Activated CD4-positive, alpha-beta T cell treated with anti-CD3 and anti-CD28 coated beads for 36 hours (primary cell): ENCODE measurements at regions of chr11 and their contacts with region 1.

Region 1: GRCh38 chr11:95150946-95151684 is 61.5 kb downstream of the ENDOD1 start:
- DNase-seq: peak; percentile 96
- ATAC-seq: peak; percentile 88
- H3K4me3 Mint-ChIP-seq: peak overlapping the region; percentile 83
- H3K27ac Mint-ChIP-seq: peak overlapping the region; percentile 87
- H3K4me1 Mint-ChIP-seq: peaks cover 36% of the 10 kb centered on the region
- H3K27me3 Mint-ChIP-seq: peaks cover 3% of the 10 kb centered on the region

Region 2: DNA sequence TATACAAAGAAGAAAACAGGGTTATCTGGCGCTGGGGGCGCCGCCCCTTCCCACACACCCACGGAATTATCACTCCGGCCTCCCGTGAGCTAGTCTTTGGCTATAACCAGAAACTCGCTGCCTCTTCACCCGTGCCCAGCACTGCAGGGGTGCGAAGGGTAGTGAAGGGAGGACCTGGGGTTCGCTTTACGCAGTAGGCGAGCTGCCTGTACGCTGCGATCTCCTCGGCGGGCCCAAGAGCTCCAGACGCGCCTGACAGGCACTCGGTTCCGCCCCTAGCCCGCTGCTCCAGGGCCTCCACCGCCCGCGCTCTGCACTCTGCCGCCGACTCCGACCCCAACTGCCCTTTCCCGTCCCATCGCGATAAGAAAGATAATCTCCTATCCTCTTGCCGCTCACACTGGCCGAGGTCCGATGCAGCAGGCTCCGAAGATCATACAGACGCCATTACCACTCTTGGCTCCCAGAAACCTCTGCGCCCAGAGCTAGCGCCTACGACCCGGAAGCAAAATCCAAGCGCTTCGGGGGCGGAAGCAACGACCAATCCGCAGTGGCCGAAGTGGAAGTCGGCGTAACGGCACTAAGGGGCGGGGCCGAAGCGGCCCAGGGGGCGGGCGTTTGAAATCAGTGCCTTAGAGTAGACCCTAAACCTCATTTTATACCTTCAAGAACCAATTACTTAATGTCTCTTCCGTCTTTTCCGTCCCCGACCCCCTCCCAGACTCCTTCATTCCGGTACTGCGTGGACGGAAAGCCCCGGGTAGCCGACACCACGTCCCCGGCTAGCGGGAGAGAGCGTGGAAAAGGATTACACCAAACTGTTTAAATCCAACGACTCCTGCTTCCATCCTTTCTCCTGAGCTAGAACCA is 177.8 kb before region 1 on chr11 and contains the starts of genes CWC15 and KDM4D:
- CTCF ChIA-PET with region 1: interaction called, 4 read pairs
- POLR2A ChIA-PET with region 1: no interaction called
- intact Hi-C with region 1: loop called (anchors 1 to 2 kb)
- DNase-seq: peak; percentile 97
- ATAC-seq: peak; percentile 99
- H3K4me3 Mint-ChIP-seq: peak within 1 kb of the TSS; percentile 84
- H3K27ac Mint-ChIP-seq: peak within 1 kb of the TSS; percentile 94
- H3K4me1 Mint-ChIP-seq: peaks cover 27% of the 10 kb centered on the region
- H3K27me3 Mint-ChIP-seq: no peaks in the 10 kb centered on the region
- total RNA-seq, gene CWC15: 74.7 to 85.0 TPM
- total RNA-seq, gene KDM4D: 1.5 to 1.8 TPM

Region 3: GRCh38 chr11:95089620-95090542 is 61.2 kb before region 1 on chr11 and contains the start of gene ENDOD1:
- CTCF ChIA-PET with region 1: interaction called, 9 read pairs
- POLR2A ChIA-PET with region 1: no interaction called
- intact Hi-C with region 1: loop called (anchors 1 to 2 kb)
- DNase-seq: peak; percentile 91
- ATAC-seq: peak; percentile 91
- H3K4me3 Mint-ChIP-seq: peak within 1 kb of the TSS; percentile 84
- H3K27ac Mint-ChIP-seq: peak within 1 kb of the TSS; percentile 96
- H3K4me1 Mint-ChIP-seq: peaks cover 61% of the 10 kb centered on the region
- H3K27me3 Mint-ChIP-seq: no peaks in the 10 kb centered on the region
- total RNA-seq, gene ENDOD1: 11.1 to 13.1 TPM

Region 4: GRCh38 chr11:95187723-95188122 is 36.6 kb after region 1 on chr11:
- CTCF ChIA-PET with region 1: no interaction called
- POLR2A ChIA-PET with region 1: no interaction called
- intact Hi-C with region 1: no loop called
- DNase-seq: peak; percentile 13
- ATAC-seq: peak; percentile 90
- H3K4me3 Mint-ChIP-seq: no peak overlapping the region
- H3K27ac Mint-ChIP-seq: peak overlapping the region; percentile 16
- H3K4me1 Mint-ChIP-seq: peaks cover 21% of the 10 kb centered on the region
- H3K27me3 Mint-ChIP-seq: no peaks in the 10 kb centered on the region

Region 5: DNA sequence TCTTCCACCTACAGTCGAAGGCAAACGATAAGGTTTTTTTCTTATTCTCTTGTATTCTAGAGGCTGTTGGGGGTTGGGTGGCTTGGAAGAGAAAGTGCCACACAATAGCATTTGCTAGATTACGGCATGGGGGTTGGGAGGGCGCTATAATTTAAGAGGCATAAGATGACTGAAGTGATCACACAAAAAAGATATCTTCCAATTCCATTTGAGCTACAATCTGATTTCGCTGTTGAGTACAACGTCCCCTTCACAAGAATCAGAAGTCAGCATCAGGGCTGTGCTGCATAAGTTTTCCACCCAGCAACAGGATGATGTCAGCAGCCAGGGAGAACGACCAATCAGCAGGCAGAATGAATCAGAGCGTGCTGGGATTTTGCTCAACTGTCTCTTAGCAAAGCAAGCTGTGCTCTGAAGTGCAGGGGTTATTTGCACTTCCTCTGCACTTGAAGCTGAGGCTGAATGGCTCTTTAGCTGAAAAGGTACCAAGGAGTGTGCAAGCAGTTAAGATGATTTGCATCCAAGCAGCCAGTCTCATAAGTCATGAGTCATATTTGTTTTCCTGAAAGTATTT is 103.1 kb after region 1 on chr11:
- CTCF ChIA-PET with region 1: interaction called, 4 read pairs
- POLR2A ChIA-PET with region 1: no interaction called
- intact Hi-C with region 1: loop called in 1 of 2 experiments (anchors 1 kb)
- DNase-seq: peak; percentile 89
- ATAC-seq: peak; percentile 99
- H3K4me3 Mint-ChIP-seq: peak overlapping the region; percentile 79
- H3K27ac Mint-ChIP-seq: peak overlapping the region; percentile 95
- H3K4me1 Mint-ChIP-seq: peaks cover 46% of the 10 kb centered on the region
- H3K27me3 Mint-ChIP-seq: no peaks in the 10 kb centered on the region

Region 6: DNA sequence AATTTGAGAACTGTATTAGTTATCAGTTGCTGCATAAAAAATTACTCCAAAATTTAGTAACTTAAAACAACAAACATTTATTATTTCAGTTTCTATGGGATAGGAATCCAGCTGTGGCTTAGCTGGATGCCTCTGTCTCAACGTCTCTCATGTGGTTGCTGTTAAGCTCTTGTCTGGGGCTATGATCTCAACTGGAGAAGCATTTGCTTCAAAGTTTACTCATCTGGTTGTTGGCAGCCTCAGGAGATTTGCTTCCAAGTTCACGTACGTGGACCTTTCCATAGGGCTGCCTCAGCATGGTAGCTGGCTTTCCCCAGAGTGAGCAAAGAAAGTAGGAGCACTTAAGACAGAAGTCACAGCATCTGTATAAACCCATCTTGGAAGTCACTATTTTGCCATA is 224.8 kb after region 1 on chr11:
- CTCF ChIA-PET with region 1: interaction called, 4 read pairs
- POLR2A ChIA-PET with region 1: no interaction called
- intact Hi-C with region 1: loop called in 1 of 2 experiments (anchors 10 kb)
- DNase-seq: no peak
- ATAC-seq: no peak
- H3K4me3 Mint-ChIP-seq: no peak overlapping the region
- H3K27ac Mint-ChIP-seq: no peak overlapping the region
- H3K4me1 Mint-ChIP-seq: no peaks in the 10 kb centered on the region
- H3K27me3 Mint-ChIP-seq: peaks cover 6% of the 10 kb centered on the region

Region 7: GRCh38 chr11:95715777-95716241 is 564.7 kb after region 1 on chr11:
- CTCF ChIA-PET with region 1: interaction called, 34 read pairs
- POLR2A ChIA-PET with region 1: interaction called, 3 read pairs
- intact Hi-C with region 1: no loop called
- DNase-seq: peak; percentile 71
- ATAC-seq: peak; percentile 76
- H3K4me3 Mint-ChIP-seq: no peak overlapping the region
- H3K27ac Mint-ChIP-seq: peak overlapping the region; percentile 69
- H3K4me1 Mint-ChIP-seq: peaks cover 50% of the 10 kb centered on the region
- H3K27me3 Mint-ChIP-seq: no peaks in the 10 kb centered on the region

Region 8: GRCh38 chr11:96389720-96390487 is 1238.8 kb after region 1 on chr11 and contains the starts of genes CCDC82 and JRKL:
- CTCF ChIA-PET with region 1: no interaction called
- POLR2A ChIA-PET with region 1: no interaction called
- intact Hi-C with region 1: loop called in 1 of 2 experiments (anchors 1 kb)
- DNase-seq: peak; percentile 99
- ATAC-seq: peak; percentile 97
- H3K4me3 Mint-ChIP-seq: peak within 1 kb of the TSS; percentile 90
- H3K27ac Mint-ChIP-seq: peak within 1 kb of the TSS; percentile 82
- H3K4me1 Mint-ChIP-seq: peaks cover 66% of the 10 kb centered on the region
- H3K27me3 Mint-ChIP-seq: no peaks in the 10 kb centered on the region
- total RNA-seq, gene CCDC82: 32.1 to 38.3 TPM
- total RNA-seq, gene JRKL: 12.9 to 15.7 TPM